PC-9 (cell line): ENCODE measurements at regions of chr21 and their contacts with region 1.

Region 1: GRCh38 chr21:37267269-37268184 is at the start of gene VPS26C:
- DNase-seq: peak; percentile 94 to 97
- H3K4me3 ChIP-seq: peak within 1 kb of the TSS; percentile 82
- H3K27ac ChIP-seq: peak within 1 kb of the TSS; percentile 92
- H3K4me1 ChIP-seq: peaks cover 20% of the 10 kb centered on the region
- H3K27me3 ChIP-seq: no peaks in the 10 kb centered on the region
- CTCF ChIP-seq: no peak
- total RNA-seq, gene VPS26C: 32.2 and 46.2 TPM in 2 replicates

Region 2: GRCh38 chr21:37072988-37073416 is 194.5 kb before region 1 on chr21 and contains the starts of genes PIGP and TTC3:
- CTCF ChIA-PET with region 1: no interaction called
- POLR2A ChIA-PET with region 1: no interaction called
- intact Hi-C with region 1: loop called (anchors 5 kb)
- DNase-seq: peak; percentile 62 to 94
- H3K4me3 ChIP-seq: peak within 1 kb of the TSS; percentile 88
- H3K27ac ChIP-seq: peak within 1 kb of the TSS; percentile 84
- H3K4me1 ChIP-seq: peaks cover 17% of the 10 kb centered on the region
- H3K27me3 ChIP-seq: no peaks in the 10 kb centered on the region
- CTCF ChIP-seq: no peak
- total RNA-seq, gene PIGP: 10.1 and 20.9 TPM in 2 replicates
- total RNA-seq, gene TTC3: 77.6 and 84.9 TPM in 2 replicates

Region 3: GRCh38 chr21:37338671-37339551 is 71.4 kb after region 1 on chr21:
- CTCF ChIA-PET with region 1: no interaction called
- POLR2A ChIA-PET with region 1: no interaction called
- intact Hi-C with region 1: loop called (anchors 1 kb)
- DNase-seq: peak; percentile 80 to 96
- H3K4me3 ChIP-seq: peak overlapping the region; percentile 48
- H3K27ac ChIP-seq: peak overlapping the region; percentile 83
- H3K4me1 ChIP-seq: peaks cover 25% of the 10 kb centered on the region
- H3K27me3 ChIP-seq: no peaks in the 10 kb centered on the region
- CTCF ChIP-seq: no peak

Region 4: GRCh38 chr21:37366482-37367316 is 99.2 kb after region 1 on chr21 and contains the start of gene DYRK1A:
- CTCF ChIA-PET with region 1: no interaction called
- POLR2A ChIA-PET with region 1: interaction called, 9 read pairs
- intact Hi-C with region 1: loop called (anchors 1 kb)
- DNase-seq: peak; percentile 91 to 95
- H3K4me3 ChIP-seq: peak within 1 kb of the TSS; percentile 78
- H3K27ac ChIP-seq: peak within 1 kb of the TSS; percentile 97
- H3K4me1 ChIP-seq: peaks cover 37% of the 10 kb centered on the region
- H3K27me3 ChIP-seq: no peaks in the 10 kb centered on the region
- CTCF ChIP-seq: no peak
- total RNA-seq, gene DYRK1A: 33.7 and 35.5 TPM in 2 replicates

Region 5: DNA sequence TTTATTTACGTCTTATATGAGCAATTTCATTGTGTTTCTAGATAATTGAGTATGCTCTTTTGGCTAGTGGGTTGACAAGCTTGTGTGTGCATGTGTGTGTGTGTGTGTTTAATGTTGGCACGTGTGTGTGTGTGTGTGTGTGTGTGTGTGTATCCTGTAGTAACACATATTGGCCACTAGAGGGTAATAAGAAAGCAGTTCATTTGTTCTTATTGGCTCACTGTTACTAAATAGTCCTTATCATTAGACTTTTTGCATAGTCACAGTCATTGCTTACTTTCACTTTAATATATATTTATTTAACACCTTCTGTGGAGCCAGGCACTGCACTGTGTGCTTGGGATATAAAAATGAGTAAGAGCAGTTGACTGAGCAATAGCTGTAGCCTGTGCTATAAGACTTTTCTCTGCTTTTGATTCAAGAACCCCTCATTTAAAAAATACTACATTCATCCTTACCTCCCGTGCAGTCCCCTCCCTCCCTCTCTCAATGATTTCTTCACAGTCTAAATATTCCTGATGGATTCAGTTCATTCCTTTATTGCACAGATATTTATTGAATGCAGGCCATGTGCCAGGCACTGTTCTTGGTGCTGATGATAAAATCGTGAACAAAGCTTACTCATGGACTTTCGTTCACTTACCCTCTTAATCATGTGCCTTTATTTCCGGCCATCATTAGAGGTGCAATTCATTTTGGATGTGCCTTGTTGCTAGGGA is 195.7 kb after region 1 on chr21:
- CTCF ChIA-PET with region 1: no interaction called
- POLR2A ChIA-PET with region 1: no interaction called
- intact Hi-C with region 1: loop called (anchors 5 kb)
- DNase-seq: peak in 1 of 2 experiments; percentile 41
- H3K4me3 ChIP-seq: no peak overlapping the region
- H3K27ac ChIP-seq: 0 out of 2 replicates have a peak overlapping the region, but pooled peaks have one; percentile 37
- H3K4me1 ChIP-seq: no peaks in the 10 kb centered on the region
- H3K27me3 ChIP-seq: no peaks in the 10 kb centered on the region
- CTCF ChIP-seq: peak; percentile 77

Region 6: DNA sequence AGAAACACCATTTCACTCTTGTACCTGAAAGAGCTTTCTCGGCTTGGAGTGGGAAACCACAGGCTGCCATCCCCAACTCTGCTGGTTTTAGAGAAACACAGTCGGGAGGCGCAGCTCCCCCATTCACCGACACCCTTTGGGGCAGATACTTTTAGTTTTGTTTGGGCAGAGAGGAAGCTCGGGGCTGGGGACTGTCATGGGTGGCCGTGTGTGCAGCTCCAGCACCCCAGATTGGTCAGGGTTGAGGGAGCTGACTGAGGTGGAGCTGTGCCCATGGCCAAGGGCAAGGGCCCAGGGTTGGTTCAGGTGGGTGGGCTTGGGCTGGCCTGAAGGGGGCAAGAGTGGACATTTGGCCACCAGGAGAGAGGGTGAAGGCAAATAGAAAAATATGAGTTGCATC is 262.1 kb after region 1 on chr21:
- CTCF ChIA-PET with region 1: no interaction called
- POLR2A ChIA-PET with region 1: interaction called, 12 read pairs
- intact Hi-C with region 1: no loop called
- DNase-seq: no peak
- H3K4me3 ChIP-seq: no peak overlapping the region
- H3K27ac ChIP-seq: no peak overlapping the region
- H3K4me1 ChIP-seq: peaks cover 19% of the 10 kb centered on the region
- H3K27me3 ChIP-seq: no peaks in the 10 kb centered on the region
- CTCF ChIP-seq: no peak